K562 (cell line): ENCODE measurements at regions of chr13 and their contacts with region 1.

Region 1: GRCh38 chr13:46975173-46975572 is 78.3 kb upstream of the HTR2A start:
- DNase-seq: no peak
- ATAC-seq: no peak
- H3K4me3 ChIP-seq: no peak overlapping the region
- H3K27ac ChIP-seq: no peak overlapping the region
- H3K4me1 ChIP-seq: no peaks in the 10 kb centered on the region
- H3K27me3 ChIP-seq: no peaks in the 10 kb centered on the region
- CTCF ChIP-seq: no peak
- EP300 ChIP-seq: no peak
- POLR2A ChIP-seq: no peak
- RAD21 ChIP-seq: no peak

Region 2: GRCh38 chr13:46235286-46235685 is 739.9 kb before region 1 on chr13:
- CTCF ChIA-PET with region 1: no interaction called
- POLR2A ChIA-PET with region 1: no interaction called
- in situ Hi-C with region 1: no loop called
- intact Hi-C with region 1: no loop called
- DNase-seq: no peak
- ATAC-seq: no peak
- H3K4me3 ChIP-seq: no peak overlapping the region
- H3K27ac ChIP-seq: no peak overlapping the region
- H3K4me1 ChIP-seq: no peaks in the 10 kb centered on the region
- H3K27me3 ChIP-seq: no peaks in the 10 kb centered on the region
- CTCF ChIP-seq: no peak
- EP300 ChIP-seq: no peak
- POLR2A ChIP-seq: no peak
- RAD21 ChIP-seq: no peak

Region 3: DNA sequence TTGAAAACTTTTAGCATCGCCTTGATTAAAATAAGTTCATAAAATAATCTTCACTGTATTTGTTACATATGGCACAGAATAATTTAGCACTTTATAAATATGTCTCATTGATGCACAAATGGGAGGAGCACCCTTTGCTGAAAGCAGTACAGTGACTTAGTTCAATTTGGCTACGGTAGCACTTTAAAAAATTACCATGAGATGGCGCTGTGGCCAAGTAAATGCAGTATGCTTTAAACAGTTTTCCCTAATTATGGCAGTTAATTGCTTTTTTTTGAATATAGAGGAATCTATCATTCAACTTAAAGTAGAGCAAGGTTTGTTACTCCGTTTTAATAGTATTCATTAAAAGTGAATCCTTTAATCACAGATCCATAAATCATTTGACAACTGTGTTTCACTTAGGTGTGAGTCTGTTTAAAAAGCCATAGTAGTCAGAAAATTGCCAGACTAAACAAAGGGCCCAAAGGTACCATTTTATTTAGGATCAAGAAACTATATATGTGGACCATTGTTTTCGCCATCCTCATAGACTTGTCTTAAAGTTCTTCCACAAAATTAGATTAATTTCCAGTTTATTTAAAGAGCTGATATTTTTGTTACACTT is 143.5 kb before region 1 on chr13:
- CTCF ChIA-PET with region 1: no interaction called
- POLR2A ChIA-PET with region 1: no interaction called
- in situ Hi-C with region 1: no loop called
- intact Hi-C with region 1: loop called (anchors 10 kb)
- DNase-seq: peak; percentile 10 to 57 (median 27)
- ATAC-seq: peak; percentile 79
- H3K4me3 ChIP-seq: no peak overlapping the region
- H3K27ac ChIP-seq: no peak overlapping the region
- H3K4me1 ChIP-seq: no peaks in the 10 kb centered on the region
- H3K27me3 ChIP-seq: peaks cover 0 to 4% of the 10 kb centered on the region in 2 experiments; a peak in 1 of 5 replicates
- CTCF ChIP-seq: peak; percentile 49 to 74 (median 56); a peak in 4 of 6 replicates
- EP300 ChIP-seq: no peak
- POLR2A ChIP-seq: no peak
- RAD21 ChIP-seq: peak; percentile 78 to 85

Region 4: DNA sequence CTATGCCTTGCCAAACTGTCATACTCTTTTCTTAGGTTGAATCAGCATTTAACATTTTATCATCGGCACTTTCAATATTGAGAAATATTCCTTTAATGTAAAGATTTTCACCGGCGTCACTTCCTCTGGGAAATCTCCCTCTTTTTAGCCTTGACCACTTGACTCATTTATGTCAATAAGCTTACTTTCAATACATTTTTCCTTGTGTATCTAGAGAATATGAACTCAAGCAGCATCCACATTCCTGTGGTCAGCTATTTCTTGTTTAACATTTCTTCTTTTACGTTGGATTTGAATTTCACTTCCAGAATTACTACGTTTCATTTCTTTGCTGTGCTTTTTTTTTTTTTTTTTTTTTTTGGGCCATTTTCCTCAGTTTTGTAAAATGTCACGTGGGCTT is 192.9 kb after region 1 on chr13:
- CTCF ChIA-PET with region 1: no interaction called
- POLR2A ChIA-PET with region 1: no interaction called
- in situ Hi-C with region 1: no loop called
- intact Hi-C with region 1: no loop called
- DNase-seq: no peak
- ATAC-seq: no peak
- H3K4me3 ChIP-seq: no peak overlapping the region
- H3K27ac ChIP-seq: no peak overlapping the region
- H3K4me1 ChIP-seq: no peaks in the 10 kb centered on the region
- H3K27me3 ChIP-seq: no peaks in the 10 kb centered on the region
- CTCF ChIP-seq: no peak
- EP300 ChIP-seq: no peak
- POLR2A ChIP-seq: no peak
- RAD21 ChIP-seq: no peak

Region 5: DNA sequence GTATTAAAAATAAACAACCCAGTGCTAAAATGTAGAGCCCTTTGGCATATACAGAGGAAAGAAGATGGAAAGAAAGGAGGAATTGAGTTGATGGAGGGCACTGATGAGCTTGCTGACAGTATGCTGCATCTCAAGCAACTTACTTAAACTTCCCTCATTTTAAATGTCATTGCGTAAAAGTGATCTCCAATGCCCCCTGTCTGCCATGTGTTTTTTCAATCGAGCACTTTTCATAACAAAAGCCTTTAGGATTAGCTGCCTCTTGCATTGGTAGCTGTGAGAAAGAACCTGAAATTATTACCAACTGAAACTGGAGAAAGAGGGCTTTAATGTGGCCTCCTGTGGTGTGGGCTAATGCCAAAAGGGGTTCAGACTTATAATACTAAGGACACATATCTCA is 484.3 kb after region 1 on chr13:
- CTCF ChIA-PET with region 1: no interaction called
- POLR2A ChIA-PET with region 1: no interaction called
- in situ Hi-C with region 1: no loop called
- intact Hi-C with region 1: loop called (anchors 10 kb)
- DNase-seq: no peak
- ATAC-seq: no peak
- H3K4me3 ChIP-seq: no peak overlapping the region
- H3K27ac ChIP-seq: no peak overlapping the region
- H3K4me1 ChIP-seq: no peaks in the 10 kb centered on the region
- H3K27me3 ChIP-seq: no peaks in the 10 kb centered on the region
- CTCF ChIP-seq: no peak
- EP300 ChIP-seq: no peak
- POLR2A ChIP-seq: no peak
- RAD21 ChIP-seq: peak; percentile 20 to 30; a peak in 2 of 4 replicates